A673 (cell line): ENCODE measurements at regions of chr9 and their contacts with region 1.

Region 1: DNA sequence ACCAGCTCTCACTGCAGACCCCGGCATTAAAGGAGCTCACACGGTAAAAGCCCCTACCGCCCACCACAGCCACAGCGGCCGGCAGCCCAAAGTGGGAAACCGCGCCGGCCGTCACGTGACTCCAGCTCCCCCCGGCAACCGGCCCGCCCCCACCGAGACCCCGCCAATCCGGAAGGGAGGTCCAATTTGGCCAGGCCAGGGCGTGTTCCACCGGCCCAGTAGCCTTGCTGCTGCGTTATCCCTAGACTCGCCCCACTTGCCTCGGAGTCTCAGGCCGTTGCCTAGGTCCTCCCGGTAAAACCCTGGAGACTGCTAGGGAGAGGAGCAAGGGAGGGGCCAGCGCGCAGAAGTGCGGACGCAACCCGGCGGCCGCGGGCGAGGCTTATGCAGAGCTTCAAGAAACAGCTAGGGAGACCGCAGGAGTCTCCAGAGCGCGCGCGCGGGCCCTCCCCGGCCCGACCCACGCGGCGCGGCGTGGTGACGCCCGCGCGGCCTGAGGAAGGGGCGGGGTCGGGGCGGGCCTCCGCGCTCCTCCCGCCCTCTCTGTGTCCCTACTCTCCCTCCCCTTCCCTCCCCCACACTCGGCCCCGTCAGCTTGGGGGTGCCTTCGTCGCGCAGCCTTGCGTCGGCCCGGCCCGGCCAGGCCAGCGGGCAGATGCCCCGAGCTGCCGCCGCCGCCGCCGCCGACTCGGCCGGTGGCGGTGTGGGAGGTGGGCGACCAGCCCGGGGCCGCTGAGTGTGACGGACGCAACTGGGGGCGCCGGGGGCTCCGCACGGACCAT is at the start of gene RIC1:
- DNase-seq: peak; percentile 96
- H3K4me3 ChIP-seq: peak within 1 kb of the TSS; percentile 98
- H3K27ac ChIP-seq: peak within 1 kb of the TSS; percentile 94
- H3K4me1 ChIP-seq: peaks cover 28% of the 10 kb centered on the region
- H3K27me3 ChIP-seq: no peaks in the 10 kb centered on the region
- CTCF ChIP-seq: no peak
- total RNA-seq, gene RIC1: 23.3 and 24.7 TPM in 2 replicates

Region 2: DNA sequence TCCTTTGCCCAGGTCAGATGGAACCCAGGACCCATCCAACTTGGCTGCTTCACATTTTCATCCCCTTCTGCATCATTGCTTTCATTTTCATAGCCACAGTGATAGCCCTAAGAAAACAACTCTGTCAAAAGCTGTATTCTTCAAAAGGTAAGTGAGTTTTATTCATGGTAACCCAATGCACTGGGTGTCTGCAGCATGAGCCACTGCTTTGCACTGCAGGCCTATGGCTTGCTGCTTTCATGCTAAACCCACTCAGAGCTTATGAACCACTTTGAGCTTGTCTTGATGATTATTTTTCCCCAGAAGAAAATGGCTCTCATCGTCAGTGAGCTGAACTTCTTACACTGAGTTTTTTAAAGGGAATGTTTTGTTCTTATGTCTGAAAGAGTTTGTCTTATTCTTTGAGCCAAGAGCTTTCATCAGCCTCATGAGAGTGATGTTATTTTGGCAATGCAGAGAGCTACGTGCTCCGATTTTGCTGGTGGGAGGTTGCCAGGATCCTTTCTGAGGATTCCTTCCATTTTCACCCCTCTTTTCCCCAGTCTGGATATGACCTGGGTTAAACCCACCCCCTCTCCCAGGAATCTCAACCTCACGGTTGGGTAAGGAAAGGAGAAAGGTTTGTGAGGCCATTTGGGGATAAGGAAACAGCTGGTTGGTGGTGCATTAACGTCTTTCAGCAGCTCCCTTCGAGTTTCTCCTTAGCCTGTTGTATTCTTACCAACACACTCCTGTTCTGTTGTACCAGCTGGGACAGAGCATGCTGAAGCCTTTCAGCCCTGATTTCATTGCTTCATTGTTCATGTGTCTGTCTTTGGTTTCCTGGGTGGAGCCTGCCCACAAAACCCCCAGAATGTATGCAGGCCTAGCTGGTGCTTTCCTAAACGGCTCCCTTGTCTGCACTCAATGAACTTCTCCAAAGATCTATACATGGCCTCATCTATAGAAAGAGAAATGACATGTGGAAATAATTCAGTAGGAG is 70.8 kb before region 1 on chr9:
- CTCF ChIA-PET with region 1: no interaction called
- POLR2A ChIA-PET with region 1: no interaction called
- intact Hi-C with region 1: no loop called
- DNase-seq: peak; percentile 28
- H3K4me3 ChIP-seq: no peak overlapping the region
- H3K27ac ChIP-seq: no peak overlapping the region
- H3K4me1 ChIP-seq: no peaks in the 10 kb centered on the region
- H3K27me3 ChIP-seq: no peaks in the 10 kb centered on the region
- CTCF ChIP-seq: no peak

Region 3: GRCh38 chr9:5832543-5833529 is 204.1 kb after region 1 on chr9 and contains the start of gene ERMP1:
- CTCF ChIA-PET with region 1: no interaction called
- POLR2A ChIA-PET with region 1: no interaction called
- intact Hi-C with region 1: loop called (anchors 5 kb)
- DNase-seq: peak; percentile 92
- H3K4me3 ChIP-seq: peak within 1 kb of the TSS; percentile 84
- H3K27ac ChIP-seq: peak within 1 kb of the TSS; percentile 69
- H3K4me1 ChIP-seq: peaks cover 9% of the 10 kb centered on the region
- H3K27me3 ChIP-seq: no peaks in the 10 kb centered on the region
- CTCF ChIP-seq: peak; percentile 85
- total RNA-seq, gene ERMP1: 11.1 and 11.5 TPM in 2 replicates

Region 4: GRCh38 chr9:6008169-6008979 is 379.7 kb after region 1 on chr9:
- CTCF ChIA-PET with region 1: no interaction called
- POLR2A ChIA-PET with region 1: no interaction called
- intact Hi-C with region 1: loop called (anchors 5 kb)
- DNase-seq: peak; percentile 98
- H3K4me3 ChIP-seq: peak overlapping the region; percentile 86
- H3K27ac ChIP-seq: peak overlapping the region; percentile 82
- H3K4me1 ChIP-seq: peaks cover 15% of the 10 kb centered on the region
- H3K27me3 ChIP-seq: no peaks in the 10 kb centered on the region
- CTCF ChIP-seq: no peak